ENCODE measurements at regions of chr10 and their contacts with region 1.

Region 1: DNA sequence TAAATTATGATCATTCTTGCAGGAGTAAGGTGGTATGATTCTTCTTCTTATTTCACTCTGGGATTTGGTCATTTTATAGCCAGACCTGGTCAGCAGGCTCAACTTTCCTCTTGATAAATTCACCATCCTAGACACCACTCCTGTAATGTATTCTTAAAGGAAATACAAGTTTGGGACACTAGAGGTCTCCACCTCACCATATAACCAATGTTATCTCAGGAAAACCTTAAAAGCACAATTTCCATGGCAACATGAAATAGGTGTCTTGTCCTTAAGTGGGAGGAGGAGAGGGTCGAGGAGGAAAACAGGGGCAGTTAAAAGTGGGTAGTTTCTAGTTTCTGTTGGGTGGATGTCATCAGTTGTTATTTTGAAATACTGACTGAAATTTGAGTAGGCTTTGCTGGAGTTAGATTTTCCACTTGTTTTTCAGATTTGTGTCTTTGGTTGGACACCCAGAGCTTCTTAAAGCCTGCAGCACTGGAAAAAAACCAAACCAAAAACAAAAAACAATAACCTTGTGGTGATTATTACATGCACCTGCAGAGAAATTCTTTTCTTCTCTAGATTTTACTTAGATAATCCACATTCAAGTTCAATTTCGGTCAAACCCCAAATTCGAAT is 163.1 kb downstream of the PRKCQ start:
- DNase-seq: peak; percentile 78

Region 2: GRCh38 chr10:6473901-6474370 is 56.9 kb after region 1 on chr10:
- in situ Hi-C with region 1: no loop called
- DNase-seq: peak; percentile 89

Region 3: DNA sequence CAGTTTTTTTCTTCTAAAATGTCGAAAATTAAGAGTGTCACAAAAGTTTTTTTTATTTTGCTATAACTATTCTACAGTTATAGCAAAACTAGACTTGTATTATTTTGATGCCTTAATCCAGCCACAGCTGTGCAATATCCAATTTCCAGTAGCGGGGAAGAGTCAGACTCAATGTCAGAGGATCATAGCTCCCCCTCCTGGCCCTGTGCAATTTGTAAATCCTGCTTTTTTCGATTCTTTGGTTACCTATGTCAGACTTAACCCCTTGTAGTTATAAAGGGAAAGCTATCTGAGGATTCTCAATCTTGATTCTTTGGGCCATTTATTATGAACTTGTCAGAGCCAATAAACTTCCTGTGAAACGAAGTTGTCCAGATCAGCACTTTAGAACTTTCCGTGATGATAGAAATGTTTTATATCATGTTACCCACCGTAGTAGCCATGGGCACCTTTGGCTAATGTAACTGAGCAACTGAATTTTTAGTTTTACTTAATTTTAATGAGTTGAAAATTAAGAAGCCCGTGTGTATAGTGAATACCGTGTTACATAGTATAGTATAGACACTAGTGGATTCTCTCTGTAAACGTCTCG is 250.8 kb after region 1 on chr10:
- in situ Hi-C with region 1: loop called (anchors 10 kb)
- DNase-seq: peak; percentile 71